HEK293 (cell line): ENCODE measurements at regions of chr15 and their contacts with region 1.

Region 1: GRCh38 chr15:65318870-65319356 is 14.4 kb downstream of the RNU5B-1 start:
- H3K4me3 ChIP-seq: no peak overlapping the region
- H3K27ac ChIP-seq: no peak overlapping the region
- H3K4me1 ChIP-seq: no peaks in the 10 kb centered on the region
- CTCF ChIP-seq: peak; percentile 98

Region 2: GRCh38 chr15:65336493-65337455 is 17.9 kb after region 1 on chr15:
- CTCF ChIA-PET with region 1: interaction called, 20 read pairs
- POLR2A ChIA-PET with region 1: no interaction called
- H3K4me3 ChIP-seq: no peak overlapping the region
- H3K27ac ChIP-seq: no peak overlapping the region
- H3K4me1 ChIP-seq: peaks cover 4% of the 10 kb centered on the region
- CTCF ChIP-seq: no peak

Region 3: GRCh38 chr15:65355173-65355987 is 36.5 kb after region 1 on chr15:
- CTCF ChIA-PET with region 1: interaction called, 13 read pairs
- POLR2A ChIA-PET with region 1: no interaction called
- H3K4me3 ChIP-seq: peak overlapping the region; percentile 7
- H3K27ac ChIP-seq: no peak overlapping the region; the same call in 1 of the 2 replicates
- H3K4me1 ChIP-seq: no peaks in the 10 kb centered on the region; the same call in 1 of the 2 replicates
- CTCF ChIP-seq: no peak

Region 4: GRCh38 chr15:65368302-65369211 is 49.6 kb after region 1 on chr15:
- CTCF ChIA-PET with region 1: interaction called, 10 read pairs
- POLR2A ChIA-PET with region 1: interaction called, 4 read pairs
- H3K4me3 ChIP-seq: no peak overlapping the region
- H3K27ac ChIP-seq: no peak overlapping the region
- H3K4me1 ChIP-seq: no peaks in the 10 kb centered on the region
- CTCF ChIP-seq: no peak